ENCODE measurements at regions of chr5 and their contacts with region 1.

Region 1: GRCh38 chr5:31944684-31945445 is 229.3 kb downstream of the GOLPH3 start:
- DNase-seq: no peak
- H3K4me3 ChIP-seq: no peak overlapping the region
- H3K27ac ChIP-seq: no peak overlapping the region
- H3K4me1 ChIP-seq: no peaks in the 10 kb centered on the region
- CTCF ChIP-seq: no peak

Region 2: DNA sequence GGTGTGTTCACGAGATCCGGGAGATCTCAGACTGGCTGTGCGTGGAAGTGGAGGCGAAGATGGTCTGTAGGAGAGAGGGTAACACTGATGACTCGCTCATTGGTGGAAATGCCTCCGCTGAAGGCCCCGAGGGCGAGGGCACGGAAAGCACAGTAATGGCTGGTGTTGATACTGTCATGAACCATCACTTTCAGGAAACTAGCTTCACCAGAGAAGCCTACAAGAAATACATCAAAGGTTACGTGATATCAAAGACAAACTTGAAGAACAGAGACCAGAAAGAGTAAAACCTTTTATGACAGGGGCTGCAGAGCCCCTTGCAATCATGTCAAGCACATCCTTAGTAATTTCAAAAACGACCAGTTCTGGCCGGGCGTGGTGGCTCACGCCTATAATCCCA is 36.5 kb before region 1 on chr5:
- CTCF ChIA-PET with region 1: no interaction called
- POLR2A ChIA-PET with region 1: no interaction called
- intact Hi-C with region 1: loop called (anchors 5 kb)
- DNase-seq: no peak
- H3K4me3 ChIP-seq: no peak overlapping the region
- H3K27ac ChIP-seq: no peak overlapping the region
- H3K4me1 ChIP-seq: no peaks in the 10 kb centered on the region
- CTCF ChIP-seq: no peak